Transverse colon (tissue), 4 donors: ENCODE measurements at regions of chrX and their contacts with region 1.

Region 1: DNA sequence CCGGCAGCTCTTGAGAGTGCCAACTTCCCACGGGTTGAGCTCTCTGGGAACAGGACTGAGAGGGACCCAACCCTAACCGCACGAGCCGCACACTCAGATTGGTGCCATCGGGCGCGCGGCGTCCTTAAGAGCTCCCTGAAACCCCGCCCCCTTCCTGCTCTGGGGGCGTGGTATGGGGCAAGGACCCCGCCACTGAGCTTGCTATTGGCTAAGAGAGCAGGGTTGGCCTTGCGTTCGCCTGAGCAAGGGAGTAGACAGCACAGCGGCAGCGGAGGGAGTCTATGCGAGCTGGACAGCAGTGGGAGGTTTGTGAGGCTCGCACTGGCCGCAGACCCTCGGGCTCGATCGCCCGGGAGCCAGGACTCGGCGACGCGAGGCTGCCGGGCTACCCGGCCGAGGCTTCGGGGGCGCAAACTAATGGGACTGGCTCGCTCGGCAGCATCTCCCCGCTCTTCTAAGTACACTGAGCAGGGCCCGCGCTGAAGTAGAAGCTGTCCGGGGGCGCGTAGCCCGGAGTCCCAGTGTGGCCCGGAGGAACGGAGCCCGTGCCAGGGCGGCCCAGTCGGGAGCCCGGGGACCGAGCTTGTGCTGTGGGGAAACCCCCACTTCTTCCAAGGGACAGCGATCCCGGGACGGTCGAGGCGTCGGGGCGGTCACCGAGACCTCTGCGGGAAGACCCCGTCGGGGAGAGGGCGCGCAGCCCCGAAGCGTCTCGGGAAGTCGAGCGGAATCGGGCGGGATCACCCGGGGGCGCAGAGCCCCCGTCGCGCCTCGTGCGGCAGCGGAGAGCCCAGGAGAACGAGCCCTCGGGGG is at the start of gene EFNB1:
- DNase-seq: peak; percentile 93
- H3K4me3 ChIP-seq: peak within 1 kb of the TSS; percentile 58 to 90 (median 72)
- H3K27ac ChIP-seq: peak within 1 kb of the TSS; percentile 84 to 94 (median 87)
- H3K4me1 ChIP-seq: peaks cover 0 to 22% (median 11%) of the 10 kb centered on the region in 4 donors
- H3K27me3 ChIP-seq: no peaks in the 10 kb centered on the region
- CTCF ChIP-seq: no peak
- EP300 ChIP-seq: no peak
- POLR2A ChIP-seq: peak; percentile 98
- total RNA-seq, gene EFNB1: 54.1 to 85.3 (median 69.0) TPM

Region 2: GRCh38 chrX:68693481-68694434 is 135.2 kb before region 1 on chrX:
- in situ Hi-C with region 1: no loop called
- intact Hi-C with region 1: no loop called
- DNase-seq: peak; percentile 69
- H3K4me3 ChIP-seq: peak overlapping the region; percentile 22 to 53 (median 40)
- H3K27ac ChIP-seq: peak overlapping the region; percentile 30 to 65 (median 55)
- H3K4me1 ChIP-seq: no peaks in the 10 kb centered on the region
- H3K27me3 ChIP-seq: peaks cover 6% of the 10 kb centered on the region
- CTCF ChIP-seq: no peak
- EP300 ChIP-seq: no peak
- POLR2A ChIP-seq: peak; percentile 47

Region 3: DNA sequence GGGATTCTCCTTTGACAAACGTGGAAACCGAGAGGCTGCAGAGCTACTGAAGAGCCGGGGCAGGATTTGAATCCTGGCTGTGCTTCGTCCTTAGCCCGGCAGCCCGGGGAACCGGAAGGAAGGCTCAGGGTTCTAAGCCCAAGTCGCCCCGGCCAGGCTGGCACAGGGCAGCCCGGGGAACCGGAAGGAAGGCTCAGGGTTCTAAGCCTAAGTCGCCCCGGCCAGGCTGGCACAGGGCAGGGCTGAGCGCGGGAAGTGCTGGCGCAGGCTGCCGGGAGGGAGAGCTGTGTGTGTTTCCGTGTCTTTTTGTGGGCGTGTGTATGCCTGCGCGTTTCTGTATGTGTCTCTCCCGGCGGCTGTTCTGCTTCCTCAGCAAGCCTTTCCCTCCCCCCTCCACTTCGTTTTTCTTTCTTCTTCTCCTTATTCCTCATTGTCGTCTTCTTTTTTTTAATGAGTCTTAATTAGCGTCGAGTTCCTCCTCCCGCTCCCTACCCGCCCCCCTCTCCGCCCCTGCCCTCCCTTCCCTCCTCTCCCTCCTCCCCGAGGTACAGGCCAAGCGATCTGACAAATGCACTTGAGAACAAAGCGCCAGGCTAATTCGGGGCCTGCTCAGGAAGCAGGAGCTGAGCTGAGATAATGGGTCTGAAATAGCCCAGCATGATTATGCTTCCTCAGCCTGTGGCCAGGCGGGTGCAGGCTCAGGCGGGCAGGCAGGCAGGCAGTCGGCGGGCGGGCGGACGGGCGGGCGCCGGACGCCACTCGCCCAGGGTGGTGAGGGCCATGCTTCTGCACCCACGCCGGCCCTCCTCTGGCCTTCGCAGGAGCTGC is 65.8 kb after region 1 on chrX:
- in situ Hi-C with region 1: no loop called
- intact Hi-C with region 1: loop called (anchors 5 kb)
- DNase-seq: peak; percentile 65
- H3K4me3 ChIP-seq: peak overlapping the region in 2 of 4 donors; percentile 5 to 35
- H3K27ac ChIP-seq: peak overlapping the region; percentile 84 to 89 (median 88)
- H3K4me1 ChIP-seq: peaks cover 11 to 28% (median 19%) of the 10 kb centered on the region in 4 donors
- H3K27me3 ChIP-seq: no peaks in the 10 kb centered on the region
- CTCF ChIP-seq: no peak
- EP300 ChIP-seq: no peak
- POLR2A ChIP-seq: peak; percentile 20

Region 4: GRCh38 chrX:69060631-69061408 is 231.9 kb after region 1 on chrX:
- in situ Hi-C with region 1: loop called in 1 of 4 experiments (anchors 25 kb)
- intact Hi-C with region 1: loop called (anchors 2 kb)
- DNase-seq: peak; percentile 46
- H3K4me3 ChIP-seq: no peak overlapping the region
- H3K27ac ChIP-seq: no peak overlapping the region
- H3K4me1 ChIP-seq: no peaks in the 10 kb centered on the region
- H3K27me3 ChIP-seq: no peaks in the 10 kb centered on the region
- CTCF ChIP-seq: peak in 4 of 5 experiments; percentile 27 to 42 (median 35)
- EP300 ChIP-seq: no peak
- POLR2A ChIP-seq: no peak

Region 5: GRCh38 chrX:69216911-69217310 is 388.0 kb after region 1 on chrX:
- in situ Hi-C with region 1: loop called in 3 of 4 experiments (anchors 5 to 10 kb)
- intact Hi-C with region 1: loop called (anchors 1 kb)
- DNase-seq: no peak
- H3K4me3 ChIP-seq: no peak overlapping the region
- H3K27ac ChIP-seq: peak overlapping the region in 3 of 4 donors; percentile 8 to 31 (median 13)
- H3K4me1 ChIP-seq: no peaks in the 10 kb centered on the region
- H3K27me3 ChIP-seq: no peaks in the 10 kb centered on the region
- CTCF ChIP-seq: no peak
- EP300 ChIP-seq: no peak
- POLR2A ChIP-seq: no peak

Region 6: DNA sequence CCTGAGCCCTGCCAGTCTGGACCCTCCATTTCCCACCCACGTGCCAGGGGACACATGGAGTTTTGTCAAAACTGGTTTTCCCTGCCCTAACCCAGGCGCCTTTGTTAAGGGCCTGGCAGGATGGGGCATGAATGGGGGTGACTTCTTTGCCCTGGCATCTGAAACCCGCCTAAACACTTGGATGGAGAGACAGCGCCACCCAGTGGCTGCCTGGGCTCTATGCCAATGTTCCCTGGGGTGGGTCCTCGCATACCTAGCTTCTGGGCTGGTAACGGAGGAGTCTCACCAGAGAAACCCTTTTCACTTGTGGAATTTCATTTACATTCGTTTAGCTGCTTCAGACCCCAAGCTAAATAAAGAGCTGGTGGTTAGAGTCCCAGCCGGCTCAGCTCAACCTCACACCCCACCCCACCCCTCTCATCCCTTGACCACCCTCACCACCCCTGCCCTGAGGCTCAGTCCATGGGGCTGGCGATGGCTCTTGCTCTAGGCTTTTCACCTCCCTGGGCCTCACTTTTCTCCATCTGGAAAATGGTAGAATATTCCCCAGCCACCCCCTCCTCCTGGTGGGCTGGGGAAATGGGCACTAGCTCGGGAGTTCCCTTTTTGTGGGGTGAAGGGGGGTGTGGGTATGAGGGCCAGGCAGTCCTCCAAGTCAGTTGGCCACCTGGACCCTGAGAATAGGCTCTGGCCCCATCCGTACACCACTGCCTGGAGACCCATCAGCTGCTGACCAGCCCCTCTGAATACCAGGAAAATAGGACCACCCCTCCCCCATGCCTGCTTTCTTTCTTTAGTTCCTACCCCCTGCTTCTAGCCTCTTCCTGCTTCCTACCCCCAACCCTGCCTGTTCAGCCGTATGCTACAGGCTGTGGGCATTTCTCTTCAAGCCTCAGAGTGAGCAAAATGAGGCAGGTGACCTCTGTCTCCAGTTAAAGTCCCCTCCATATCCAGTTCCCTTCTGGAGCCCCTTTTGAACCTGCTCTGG is 393.5 kb after region 1 on chrX:
- in situ Hi-C with region 1: loop called in 3 of 4 experiments (anchors 5 to 10 kb)
- intact Hi-C with region 1: loop called (anchors 1 kb)
- DNase-seq: peak; percentile 65
- H3K4me3 ChIP-seq: no peak overlapping the region
- H3K27ac ChIP-seq: no peak overlapping the region
- H3K4me1 ChIP-seq: no peaks in the 10 kb centered on the region
- H3K27me3 ChIP-seq: no peaks in the 10 kb centered on the region
- CTCF ChIP-seq: peak; percentile 64 to 72 (median 67)
- EP300 ChIP-seq: no peak
- POLR2A ChIP-seq: no peak

Region 7: DNA sequence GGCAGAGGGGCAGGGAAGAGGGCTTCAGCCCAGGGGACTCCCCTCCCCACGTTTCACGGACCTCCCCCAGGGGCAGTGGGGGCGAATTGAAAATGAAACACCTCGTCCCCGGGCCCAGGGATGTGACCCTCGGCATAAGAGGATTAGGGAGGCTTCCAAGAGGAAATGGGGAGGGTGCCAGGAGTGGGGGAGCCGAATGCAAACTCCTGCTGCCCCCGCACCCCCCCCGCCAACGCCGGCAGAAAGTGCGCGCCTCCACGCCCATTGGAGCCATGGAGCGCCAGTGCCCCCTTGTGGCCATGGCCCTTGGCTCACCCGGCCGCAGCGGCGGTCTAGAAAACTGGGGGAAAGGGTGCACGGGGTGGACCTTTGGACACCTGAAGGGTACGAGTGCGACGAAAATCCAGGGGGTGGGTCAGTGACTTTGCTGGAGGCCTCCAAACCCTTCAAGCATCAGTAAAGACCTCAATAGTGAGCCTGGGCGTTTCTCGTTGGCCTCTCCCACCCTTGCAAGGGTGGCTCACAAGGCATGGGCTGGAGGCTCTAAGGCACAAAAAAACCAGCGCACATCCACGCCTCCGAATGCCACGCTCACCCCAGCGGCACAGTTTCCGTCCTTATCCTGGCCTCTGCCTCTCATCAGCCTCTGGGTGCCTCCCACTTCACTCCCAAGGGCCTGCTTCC is 457.1 kb after region 1 on chrX:
- in situ Hi-C with region 1: loop called in 3 of 4 experiments (anchors 10 kb)
- intact Hi-C with region 1: no loop called
- DNase-seq: peak; percentile 64
- H3K4me3 ChIP-seq: peak overlapping the region in 3 of 4 donors; percentile 20 to 48 (median 31)
- H3K27ac ChIP-seq: peak overlapping the region; percentile 22 to 56 (median 52)
- H3K4me1 ChIP-seq: peaks cover 0 to 8% (median 3%) of the 10 kb centered on the region in 4 donors
- H3K27me3 ChIP-seq: no peaks in the 10 kb centered on the region
- CTCF ChIP-seq: peak; percentile 71 to 91 (median 77)
- EP300 ChIP-seq: no peak
- POLR2A ChIP-seq: no peak

Region 8: GRCh38 chrX:69387567-69388487 is 558.9 kb after region 1 on chrX:
- in situ Hi-C with region 1: no loop called
- intact Hi-C with region 1: loop called (anchors 10 kb)
- DNase-seq: peak; percentile 19
- H3K4me3 ChIP-seq: no peak overlapping the region
- H3K27ac ChIP-seq: no peak overlapping the region
- H3K4me1 ChIP-seq: no peaks in the 10 kb centered on the region
- H3K27me3 ChIP-seq: no peaks in the 10 kb centered on the region
- CTCF ChIP-seq: peak; percentile 41 to 68 (median 47)
- EP300 ChIP-seq: no peak
- POLR2A ChIP-seq: no peak